CD4-positive, alpha-beta T cell (primary cell): ENCODE measurements at regions of chr20 and their contacts with region 1.

Region 1: DNA sequence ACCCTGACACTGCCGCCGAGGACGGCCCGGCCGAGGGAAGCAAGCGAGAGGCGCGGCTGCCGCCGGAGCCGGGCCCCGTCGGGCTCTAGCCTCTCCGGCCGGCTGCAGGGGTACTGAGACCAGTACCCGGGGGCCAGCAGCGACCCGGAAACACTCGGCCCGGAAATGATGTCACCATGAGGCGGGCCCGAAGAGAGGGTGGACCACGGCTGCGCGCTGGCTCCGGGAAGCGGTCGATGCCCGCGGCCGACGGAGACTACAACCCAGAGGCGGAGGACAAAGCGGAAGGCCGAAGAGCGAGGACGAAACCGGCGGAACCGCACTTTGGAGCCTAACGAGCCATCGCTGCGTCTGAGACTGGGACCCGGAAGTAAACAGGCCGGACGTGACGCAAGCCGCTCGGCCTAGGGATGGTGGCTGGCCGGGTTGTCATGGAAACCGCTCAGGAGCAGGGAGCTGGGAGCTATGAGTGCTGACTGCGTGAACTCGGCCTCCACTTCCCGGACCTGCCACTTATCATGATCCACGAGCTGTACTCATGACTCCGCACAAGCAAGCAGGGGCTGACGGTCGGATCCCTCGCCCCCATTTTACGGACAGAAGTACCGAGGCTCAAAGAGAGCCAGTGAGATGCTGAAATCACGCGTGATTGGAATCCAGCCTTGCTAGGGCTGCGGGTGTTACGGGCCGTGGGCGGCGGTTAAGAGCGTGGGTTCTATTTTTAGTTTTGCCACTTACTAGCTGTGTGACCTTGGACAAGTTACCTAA is at the start of gene SPATA2:
- DNase-seq: peak; percentile 85 to 98 (median 91)
- ATAC-seq: peak; percentile 75
- H3K4me3 ChIP-seq: peak within 1 kb of the TSS; percentile 93
- H3K4me3 Mint-ChIP-seq: peak within 1 kb of the TSS; percentile 98
- H3K27ac ChIP-seq: peak within 1 kb of the TSS; percentile 99 to 100
- H3K27ac Mint-ChIP-seq: peak within 1 kb of the TSS; percentile 99
- H3K4me1 ChIP-seq: peaks cover 33% of the 10 kb centered on the region
- H3K4me1 Mint-ChIP-seq: peaks cover 39% of the 10 kb centered on the region
- H3K27me3 ChIP-seq: no peaks in the 10 kb centered on the region
- H3K27me3 Mint-ChIP-seq: no peaks in the 10 kb centered on the region
- CTCF ChIP-seq: no peak
- total RNA-seq, gene SPATA2: 16.0 to 16.4 TPM

Region 2: DNA sequence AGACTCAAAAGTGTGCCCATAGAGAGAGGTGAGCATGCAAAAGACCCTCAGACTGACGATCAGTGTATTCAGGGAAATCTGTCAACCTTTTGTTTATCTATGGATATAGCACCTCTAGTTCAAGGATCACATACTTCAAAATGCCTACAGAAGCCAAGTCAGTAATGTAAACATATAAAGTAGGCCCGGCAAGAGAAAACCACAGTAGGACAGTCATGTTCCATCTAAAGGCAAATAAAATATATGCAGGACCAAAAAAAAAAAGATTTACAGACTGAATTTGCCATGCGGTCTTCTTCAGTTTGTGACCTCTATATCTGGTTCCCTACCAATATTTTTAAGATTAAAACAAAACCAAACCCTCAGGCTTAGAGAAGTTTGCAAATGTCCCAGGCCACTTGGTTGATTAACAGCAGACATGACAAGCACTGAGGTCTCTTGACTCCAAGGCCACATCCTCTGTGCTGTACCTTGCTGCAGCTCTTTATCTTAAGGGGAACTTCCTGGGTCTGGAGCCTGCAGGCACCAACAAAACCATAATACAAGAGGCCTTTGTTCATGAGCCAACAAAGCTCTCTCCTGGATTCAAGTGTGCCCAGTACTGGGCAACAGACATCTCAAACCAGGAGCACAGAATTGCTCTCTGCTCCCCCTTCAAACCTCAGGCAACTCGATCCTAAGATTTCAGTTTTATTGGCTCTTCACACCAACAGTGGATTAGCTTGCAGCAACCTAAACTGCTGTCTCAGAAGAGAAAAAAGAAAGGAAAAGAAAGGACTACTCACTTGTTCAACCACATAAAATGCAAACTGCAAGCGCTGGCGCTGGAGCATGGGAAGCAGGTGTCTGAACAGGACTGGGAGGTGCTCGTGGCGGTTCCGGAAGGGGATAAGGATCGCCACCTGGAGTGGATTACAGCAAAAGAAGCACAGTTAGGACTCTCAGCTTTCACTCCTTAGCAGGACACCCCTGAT is 273.6 kb before region 1 on chr20:
- CTCF ChIA-PET with region 1: no interaction called
- POLR2A ChIA-PET with region 1: no interaction called
- intact Hi-C with region 1: no loop called
- DNase-seq: peak in 1 of 14 experiments; percentile 17
- ATAC-seq: no peak
- H3K4me3 ChIP-seq: no peak overlapping the region
- H3K4me3 Mint-ChIP-seq: no peak overlapping the region
- H3K27ac ChIP-seq: no peak overlapping the region
- H3K27ac Mint-ChIP-seq: no peak overlapping the region
- H3K4me1 ChIP-seq: no peaks in the 10 kb centered on the region
- H3K4me1 Mint-ChIP-seq: no peaks in the 10 kb centered on the region
- H3K27me3 ChIP-seq: no peaks in the 10 kb centered on the region
- H3K27me3 Mint-ChIP-seq: no peaks in the 10 kb centered on the region
- CTCF ChIP-seq: no peak

Region 3: DNA sequence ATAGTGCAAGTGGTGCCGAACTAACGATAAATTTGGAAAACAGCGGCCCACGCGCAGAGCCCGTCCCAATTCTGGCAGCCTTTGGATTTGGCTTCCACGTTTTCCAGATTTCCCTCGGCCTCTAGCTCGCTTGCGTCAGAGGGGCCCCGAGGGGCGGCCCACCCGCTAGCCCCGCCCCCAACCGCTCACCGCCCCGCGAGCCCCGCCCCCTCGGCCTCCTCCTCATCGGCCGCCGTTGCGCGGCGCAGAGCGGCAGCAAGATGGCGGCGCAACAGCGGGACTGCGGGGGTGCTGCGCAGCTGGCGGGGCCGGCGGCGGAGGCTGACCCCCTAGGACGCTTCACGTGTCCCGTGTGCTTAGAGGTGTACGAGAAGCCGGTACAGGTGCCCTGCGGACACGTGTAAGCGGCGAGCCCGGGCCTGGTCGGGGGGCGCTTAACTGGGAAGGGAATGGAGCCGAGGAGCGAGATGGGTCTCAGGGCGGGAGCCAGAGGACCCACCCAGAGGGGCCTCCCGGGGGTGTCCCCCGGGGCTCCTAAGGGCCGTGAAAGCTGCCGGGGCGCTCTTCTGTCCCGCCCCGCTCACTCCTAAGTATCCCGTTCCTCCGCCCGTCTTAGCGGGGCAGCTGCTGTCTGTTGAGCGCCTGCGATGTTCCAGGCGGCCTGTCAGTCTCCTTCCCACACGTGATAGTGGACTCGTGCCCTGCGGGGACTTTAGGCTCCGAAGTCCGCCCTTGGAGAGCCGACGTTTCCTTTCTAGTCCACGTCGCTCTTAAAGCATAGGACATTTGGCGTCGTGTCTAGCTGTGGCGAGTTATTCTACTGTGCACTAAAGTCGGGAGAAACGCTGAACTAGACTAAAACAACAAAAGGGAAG is 20.8 kb after region 1 on chr20 and contains the start of gene RNF114:
- CTCF ChIA-PET with region 1: interaction called, 7 read pairs
- POLR2A ChIA-PET with region 1: interaction called, 33 read pairs
- intact Hi-C with region 1: loop called in 1 of 2 experiments (anchors 1 kb)
- DNase-seq: peak; percentile 84 to 97 (median 90)
- ATAC-seq: peak; percentile 96
- H3K4me3 ChIP-seq: peak within 1 kb of the TSS; percentile 97
- H3K4me3 Mint-ChIP-seq: peak within 1 kb of the TSS; percentile 93
- H3K27ac ChIP-seq: peak within 1 kb of the TSS; percentile 81 to 82
- H3K27ac Mint-ChIP-seq: peak within 1 kb of the TSS; percentile 90
- H3K4me1 ChIP-seq: peaks cover 42% of the 10 kb centered on the region
- H3K4me1 Mint-ChIP-seq: peaks cover 51% of the 10 kb centered on the region
- H3K27me3 ChIP-seq: no peaks in the 10 kb centered on the region
- H3K27me3 Mint-ChIP-seq: no peaks in the 10 kb centered on the region
- CTCF ChIP-seq: no peak
- total RNA-seq, gene RNF114: 129 to 132 TPM

Region 4: DNA sequence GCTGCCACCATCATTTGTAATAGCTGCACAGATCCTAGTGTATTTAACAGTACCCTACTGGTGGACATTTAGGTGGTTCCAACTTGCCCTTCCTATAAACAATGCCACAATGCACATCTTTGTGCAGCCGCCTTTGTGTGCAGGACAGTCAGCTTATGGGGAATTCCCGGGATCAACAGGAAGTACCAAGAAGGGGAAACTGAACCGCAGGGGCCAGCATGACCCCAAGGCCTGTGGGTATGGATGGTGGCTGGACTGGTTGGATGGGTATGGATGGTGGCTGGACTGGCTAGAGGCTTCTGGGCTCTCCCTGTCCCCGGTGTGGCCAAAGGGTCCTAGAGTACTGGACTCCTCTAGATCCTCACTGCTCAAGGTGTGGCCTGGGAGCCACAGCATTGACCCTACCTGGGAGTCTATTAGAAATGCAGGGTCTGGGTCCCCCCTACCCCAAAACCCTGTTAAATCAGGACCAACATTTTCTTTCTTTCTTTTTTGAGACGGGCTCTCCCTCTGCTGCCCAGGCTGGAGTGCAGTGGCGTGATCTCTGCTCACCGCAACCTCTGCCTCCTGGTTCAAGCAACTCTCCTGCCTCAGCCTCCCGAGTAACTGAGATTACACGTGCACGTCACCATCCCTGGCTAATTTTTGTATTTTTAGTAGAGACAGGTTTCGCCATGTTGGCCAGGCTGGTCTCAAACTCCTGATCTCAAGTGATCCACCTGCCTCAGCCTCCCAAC is 322.0 kb after region 1 on chr20:
- CTCF ChIA-PET with region 1: no interaction called
- POLR2A ChIA-PET with region 1: no interaction called
- intact Hi-C with region 1: no loop called
- DNase-seq: no peak
- ATAC-seq: no peak
- H3K4me3 ChIP-seq: no peak overlapping the region
- H3K4me3 Mint-ChIP-seq: no peak overlapping the region
- H3K27ac ChIP-seq: no peak overlapping the region
- H3K27ac Mint-ChIP-seq: no peak overlapping the region
- H3K4me1 ChIP-seq: no peaks in the 10 kb centered on the region
- H3K4me1 Mint-ChIP-seq: no peaks in the 10 kb centered on the region
- H3K27me3 ChIP-seq: no peaks in the 10 kb centered on the region
- H3K27me3 Mint-ChIP-seq: no peaks in the 10 kb centered on the region
- CTCF ChIP-seq: no peak